Ovary (tissue), 10 donors: ENCODE measurements at regions of chr6 and their contacts with region 1.

Region 1: GRCh38 chr6:112253841-112254816 is at the start of gene LAMA4:
- DNase-seq: peak; percentile 55 to 71 (median 60)
- H3K4me3 ChIP-seq: peak within 1 kb of the TSS; percentile 83
- H3K27ac ChIP-seq: peak within 1 kb of the TSS; percentile 31 to 76
- H3K4me1 ChIP-seq: peaks cover 6% of the 10 kb centered on the region
- H3K27me3 ChIP-seq: no peaks in the 10 kb centered on the region
- CTCF ChIP-seq: peak in 1 of 3 donors; percentile 16
- EP300 ChIP-seq: no peak
- POLR2A ChIP-seq: peak; percentile 29
- total RNA-seq, gene LAMA4: 29.0 to 92.8 (median 42.5) TPM

Region 2: DNA sequence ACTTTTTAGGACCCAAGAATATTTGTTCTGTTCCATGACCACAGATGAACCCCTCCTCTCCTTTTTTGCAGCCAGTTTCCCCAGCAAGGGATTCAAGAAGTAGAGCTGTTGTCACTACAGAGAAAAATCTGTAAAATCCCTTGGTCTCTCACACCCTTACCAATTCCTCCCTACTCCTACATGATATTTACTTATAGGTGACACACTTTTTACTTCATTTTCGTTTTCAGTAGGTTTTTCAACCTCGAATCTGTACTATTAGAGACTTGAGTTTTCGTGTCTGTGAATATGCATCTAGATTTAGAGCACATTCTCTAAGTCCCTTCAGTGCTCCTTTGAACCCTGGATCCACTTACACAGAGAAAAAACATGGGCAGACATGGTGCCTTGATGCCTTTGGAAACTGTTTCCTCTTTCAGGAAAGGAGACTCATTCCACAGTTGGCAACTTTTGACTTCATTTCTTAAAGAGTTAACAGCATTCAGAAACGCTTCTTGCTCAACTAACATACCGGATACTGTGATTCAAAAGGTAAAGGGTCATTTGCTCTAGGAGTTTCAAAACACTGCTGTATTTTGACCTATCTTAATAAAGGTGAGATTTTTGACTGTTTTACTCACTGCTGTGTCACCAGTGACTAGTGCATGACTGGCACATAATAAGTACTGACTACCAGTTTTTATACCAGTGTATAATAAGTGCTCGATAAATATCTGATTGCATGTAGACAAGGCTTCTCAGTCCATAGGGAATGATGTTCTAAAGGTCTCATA is 50.4 kb before region 1 on chr6:
- intact Hi-C with region 1: loop called in 1 of 4 experiments (anchors 5 kb)
- DNase-seq: no peak
- H3K4me3 ChIP-seq: no peak overlapping the region
- H3K27ac ChIP-seq: no peak overlapping the region
- H3K4me1 ChIP-seq: peaks cover 9% of the 10 kb centered on the region
- H3K27me3 ChIP-seq: no peaks in the 10 kb centered on the region
- CTCF ChIP-seq: no peak
- EP300 ChIP-seq: no peak
- POLR2A ChIP-seq: no peak

Region 3: GRCh38 chr6:112360498-112360897 is 106.4 kb after region 1 on chr6:
- intact Hi-C with region 1: no loop called
- DNase-seq: no peak
- H3K4me3 ChIP-seq: no peak overlapping the region
- H3K27ac ChIP-seq: no peak overlapping the region
- H3K4me1 ChIP-seq: peaks cover 1% of the 10 kb centered on the region
- H3K27me3 ChIP-seq: no peaks in the 10 kb centered on the region
- CTCF ChIP-seq: no peak
- EP300 ChIP-seq: no peak
- POLR2A ChIP-seq: no peak